ENCODE measurements at regions of chr16 and their contacts with region 1.

Region 1: GRCh38 chr16:11255737-11256660 is at the start of gene SOCS1:
- DNase-seq: peak; percentile 90
- H3K4me3 Mint-ChIP-seq: peak within 1 kb of the TSS; percentile 99
- H3K27ac Mint-ChIP-seq: peak within 1 kb of the TSS; percentile 90
- H3K4me1 Mint-ChIP-seq: peaks cover 51% of the 10 kb centered on the region
- H3K27me3 Mint-ChIP-seq: peaks cover 8% of the 10 kb centered on the region
- total RNA-seq, gene SOCS1: 158 and 161 TPM in 2 replicates

Region 2: GRCh38 chr16:10964039-10964890 is 291.7 kb before region 1 on chr16:
- intact Hi-C with region 1: loop called (anchors 1 kb)
- DNase-seq: peak; percentile 74
- H3K4me3 Mint-ChIP-seq: peak overlapping the region; percentile 68
- H3K27ac Mint-ChIP-seq: peak overlapping the region; percentile 97
- H3K4me1 Mint-ChIP-seq: peaks cover 75% of the 10 kb centered on the region
- H3K27me3 Mint-ChIP-seq: no peaks in the 10 kb centered on the region

Region 3: GRCh38 chr16:11051879-11052808 is 203.9 kb before region 1 on chr16:
- intact Hi-C with region 1: loop called (anchors 1 kb)
- DNase-seq: peak; percentile 75
- H3K4me3 Mint-ChIP-seq: peak overlapping the region; percentile 60
- H3K27ac Mint-ChIP-seq: peak overlapping the region; percentile 83
- H3K4me1 Mint-ChIP-seq: peaks cover 68% of the 10 kb centered on the region
- H3K27me3 Mint-ChIP-seq: no peaks in the 10 kb centered on the region

Region 4: GRCh38 chr16:11175787-11176341 is 80.1 kb before region 1 on chr16:
- intact Hi-C with region 1: loop called (anchors 2 kb)
- DNase-seq: no peak
- H3K4me3 Mint-ChIP-seq: peak overlapping the region; percentile 50
- H3K27ac Mint-ChIP-seq: peak overlapping the region; percentile 78
- H3K4me1 Mint-ChIP-seq: peaks cover 61% of the 10 kb centered on the region
- H3K27me3 Mint-ChIP-seq: peaks cover 2% of the 10 kb centered on the region

Region 5: GRCh38 chr16:11312718-11313492 is 56.9 kb after region 1 on chr16:
- intact Hi-C with region 1: loop called (anchors 1 kb)
- DNase-seq: peak; percentile 38
- H3K4me3 Mint-ChIP-seq: peak overlapping the region; percentile 27
- H3K27ac Mint-ChIP-seq: peak overlapping the region; percentile 57
- H3K4me1 Mint-ChIP-seq: peaks cover 61% of the 10 kb centered on the region
- H3K27me3 Mint-ChIP-seq: peaks cover 3% of the 10 kb centered on the region

Region 6: DNA sequence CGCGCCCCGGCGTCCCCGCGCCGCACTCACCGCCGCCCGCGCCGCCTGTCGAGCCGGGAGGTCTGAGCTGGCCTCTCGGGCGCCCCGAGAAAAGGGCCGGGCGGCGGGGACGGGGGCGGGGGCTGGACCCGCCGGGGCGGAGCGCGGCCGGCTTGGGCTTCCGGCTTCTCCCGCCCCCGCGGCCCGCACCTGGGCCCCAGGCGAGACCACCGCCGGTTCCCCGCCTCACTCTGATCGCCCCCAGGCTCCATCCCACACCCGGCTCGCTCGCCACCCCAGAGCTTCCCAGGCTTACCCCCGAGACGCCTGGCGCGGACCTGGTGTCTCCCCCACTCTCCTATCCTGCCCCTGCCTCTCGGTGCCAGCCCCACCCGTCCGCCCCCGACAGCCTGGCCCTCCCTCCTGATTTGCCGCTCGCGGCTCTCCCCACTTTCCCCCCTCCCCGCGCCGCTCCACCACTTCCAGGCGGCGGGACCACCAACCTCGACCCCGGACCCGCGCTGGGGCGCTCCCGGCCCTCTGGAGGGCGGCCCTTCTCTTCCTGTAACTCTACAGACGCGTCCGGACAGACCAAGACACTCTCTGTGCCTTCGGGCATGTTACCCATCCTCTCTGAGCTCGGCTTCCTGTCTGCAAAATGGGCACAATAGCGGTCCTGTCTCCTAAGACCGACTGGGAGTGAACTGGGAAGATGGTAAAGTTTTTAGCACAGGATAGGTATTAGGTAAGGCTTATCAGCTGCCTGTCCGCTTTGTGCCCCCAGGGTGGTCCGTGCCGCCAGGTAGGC is 331.1 kb after region 1 on chr16 and contains the start of gene LITAF:
- intact Hi-C with region 1: loop called (anchors 2 kb)
- DNase-seq: peak; percentile 45
- H3K4me3 Mint-ChIP-seq: peak within 1 kb of the TSS; percentile 93
- H3K27ac Mint-ChIP-seq: peak within 1 kb of the TSS; percentile 92
- H3K4me1 Mint-ChIP-seq: peaks cover 38% of the 10 kb centered on the region
- H3K27me3 Mint-ChIP-seq: no peaks in the 10 kb centered on the region
- total RNA-seq, gene LITAF: 197 and 199 TPM in 2 replicates

Measured in activated T-helper 1 cell treated with anti-CD3 and anti-CD28 coated beads, Interleukin-12 subunit alpha, Interleukin-12 subunit beta, Interleukin-2, Interleukin-4 antibody, amounts not matched to agents 30 ng/mL and 10 ng/mL and 1 ng/mL, durations not matched to agents 14 hours and 24 hours and 36 hours (primary cell).